Transverse colon (tissue), 4 donors: ENCODE measurements at regions of chr6 and their contacts with region 1.

Region 1: DNA sequence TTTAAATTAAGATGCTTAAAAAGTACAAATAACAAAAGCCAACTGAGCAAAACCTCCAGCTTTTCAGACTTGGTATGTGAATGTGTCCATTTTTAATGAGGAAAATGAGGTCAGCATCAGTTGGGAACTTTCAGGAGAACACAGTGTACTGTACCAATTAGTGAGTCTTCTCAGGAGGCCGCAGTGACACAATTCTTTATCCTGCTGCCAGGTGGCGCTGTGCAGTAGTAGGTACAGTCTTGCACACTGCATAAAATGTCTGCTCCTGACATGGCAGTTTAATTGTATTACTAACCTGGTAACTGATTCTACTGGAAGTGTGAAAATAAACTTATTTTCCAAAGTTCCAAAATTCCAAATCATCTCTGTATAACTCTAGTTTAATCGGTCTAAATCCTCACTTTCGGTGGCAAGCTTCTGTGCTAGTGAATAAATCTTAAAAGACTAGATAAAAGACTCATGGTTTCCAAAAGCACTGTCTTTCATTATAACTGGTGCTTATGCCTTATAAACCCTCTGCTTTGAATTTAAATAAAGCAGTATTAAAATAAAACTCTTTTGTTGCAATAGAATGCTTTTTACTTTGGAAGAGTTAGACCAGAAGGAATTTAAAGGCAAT is 214.8 kb upstream of the MMS22L start:
- DNase-seq: peak; percentile 54
- H3K4me3 ChIP-seq: no peak overlapping the region
- H3K27ac ChIP-seq: no peak overlapping the region
- H3K4me1 ChIP-seq: no peaks in the 10 kb centered on the region
- H3K27me3 ChIP-seq: no peaks in the 10 kb centered on the region
- CTCF ChIP-seq: peak; percentile 62 to 78 (median 66)
- EP300 ChIP-seq: no peak
- POLR2A ChIP-seq: no peak

Region 2: GRCh38 chr6:98845211-98846020 is 1347.6 kb after region 1 on chr6:
- in situ Hi-C with region 1: no loop called
- intact Hi-C with region 1: loop called (anchors 10 kb)
- DNase-seq: peak; percentile 70
- H3K4me3 ChIP-seq: peak overlapping the region in 2 of 4 donors; percentile 1 to 35
- H3K27ac ChIP-seq: no peak overlapping the region
- H3K4me1 ChIP-seq: peaks cover 5 to 37% (median 21%) of the 10 kb centered on the region in 4 donors
- H3K27me3 ChIP-seq: peaks cover 100% of the 10 kb centered on the region
- CTCF ChIP-seq: peak; percentile 77 to 82 (median 79)
- EP300 ChIP-seq: no peak
- POLR2A ChIP-seq: no peak

Region 3: DNA sequence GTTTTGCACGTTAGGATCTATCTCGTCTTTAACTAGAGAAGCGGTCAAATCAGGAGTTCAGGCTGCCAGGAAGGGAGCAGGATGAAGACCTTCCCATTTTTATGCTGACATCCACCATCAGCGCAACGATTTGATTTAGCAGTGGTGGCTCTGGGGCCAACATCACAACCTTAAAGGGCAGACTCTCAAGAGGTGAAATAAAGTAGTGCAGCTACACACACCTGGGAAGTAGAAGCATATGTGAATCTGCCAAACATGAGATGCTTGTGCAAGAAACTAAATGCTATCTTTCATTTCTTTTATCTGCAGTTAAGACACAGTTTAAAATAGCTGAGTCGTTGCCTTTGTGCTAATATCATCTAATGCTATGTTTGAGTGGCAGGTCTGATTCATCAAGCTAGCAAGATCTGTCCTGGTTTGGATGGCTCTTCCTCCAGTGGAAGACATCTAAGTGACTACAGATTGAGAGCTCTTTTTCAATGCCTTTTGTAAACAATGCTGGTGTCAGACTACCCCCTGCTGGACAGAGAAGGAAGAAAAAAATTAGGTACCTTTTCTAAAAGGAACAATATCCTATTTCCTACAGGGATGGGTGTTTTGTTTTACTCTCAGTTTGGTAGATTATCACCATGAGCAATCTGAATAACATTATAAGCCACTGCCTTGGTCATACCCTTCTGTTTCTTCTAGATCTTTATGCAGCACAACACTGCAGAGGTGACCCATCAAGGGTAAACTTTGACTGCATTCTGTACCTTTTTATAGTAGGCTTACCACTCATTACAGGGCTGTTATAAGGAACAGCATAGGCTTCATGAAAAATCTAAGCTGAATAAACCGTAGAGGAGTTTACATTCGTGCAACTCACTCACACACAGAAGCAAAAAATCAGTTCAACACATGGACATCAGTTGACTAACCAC is 1621.5 kb after region 1 on chr6:
- in situ Hi-C with region 1: loop called in 1 of 4 experiments (anchors 25 kb)
- intact Hi-C with region 1: no loop called
- DNase-seq: no peak
- H3K4me3 ChIP-seq: no peak overlapping the region
- H3K27ac ChIP-seq: no peak overlapping the region
- H3K4me1 ChIP-seq: no peaks in the 10 kb centered on the region
- H3K27me3 ChIP-seq: no peaks in the 10 kb centered on the region
- CTCF ChIP-seq: peak; percentile 59 to 70 (median 63)
- EP300 ChIP-seq: no peak
- POLR2A ChIP-seq: no peak